ENCODE measurements at regions of chr5 and their contacts with region 1.

Region 1: DNA sequence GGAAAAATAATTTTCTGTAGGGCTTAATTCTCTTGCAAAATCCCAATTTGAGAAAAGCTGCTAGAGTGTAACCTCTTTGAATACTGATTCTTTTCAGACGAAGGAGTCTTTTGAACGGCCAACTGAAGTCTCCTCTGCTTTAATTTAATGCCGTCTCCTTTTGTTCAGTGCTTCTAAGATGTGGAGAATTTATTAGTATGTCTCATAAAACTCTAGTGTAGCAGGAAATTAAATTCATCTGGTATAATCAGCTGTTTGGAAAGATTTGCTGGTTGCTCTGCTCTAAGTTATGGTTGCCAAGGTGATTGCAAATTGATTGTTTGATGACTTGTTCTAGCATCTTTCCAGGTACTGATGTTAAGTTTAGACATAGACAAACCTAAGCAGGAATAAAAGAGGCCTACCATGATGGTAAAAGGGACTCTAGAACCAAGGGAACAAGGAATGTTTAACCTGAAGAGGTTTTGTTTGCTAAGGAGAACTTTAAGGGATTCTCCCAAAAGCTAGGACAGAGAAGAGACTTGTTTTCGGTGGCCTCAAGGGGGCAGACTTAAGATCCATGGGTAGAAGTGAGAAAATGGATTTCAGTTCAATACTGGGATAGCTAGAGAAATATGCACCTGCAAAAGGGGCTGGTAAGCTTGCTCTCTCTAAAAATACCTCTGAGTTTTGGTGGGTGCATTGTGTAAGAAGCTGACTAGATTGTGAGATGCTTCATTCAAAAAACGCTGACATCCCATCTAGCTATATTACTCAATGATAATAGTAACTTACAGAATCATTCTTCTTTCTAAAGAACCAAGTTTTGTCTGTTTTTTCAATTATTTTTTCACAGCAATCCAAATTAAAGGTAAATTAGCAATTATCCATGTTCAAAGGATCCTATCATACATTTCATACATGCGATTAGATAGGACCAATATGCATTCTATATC is 5.7 kb upstream of the ADRB2 start:
- DNase-seq: no peak
- H3K4me3 Mint-ChIP-seq: no peak overlapping the region
- H3K27ac Mint-ChIP-seq: no peak overlapping the region
- H3K4me1 Mint-ChIP-seq: peaks cover 9% of the 10 kb centered on the region
- H3K27me3 Mint-ChIP-seq: peaks cover 28% of the 10 kb centered on the region

Region 2: GRCh38 chr5:148849461-148849860 is 28.7 kb after region 1 on chr5:
- CTCF ChIA-PET with region 1: interaction called, 14 read pairs
- POLR2A ChIA-PET with region 1: interaction called, 58 read pairs
- DNase-seq: peak; percentile 73
- H3K4me3 Mint-ChIP-seq: peak overlapping the region; percentile 12
- H3K27ac Mint-ChIP-seq: peak overlapping the region; percentile 97
- H3K4me1 Mint-ChIP-seq: peaks cover 83% of the 10 kb centered on the region
- H3K27me3 Mint-ChIP-seq: peaks cover 2% of the 10 kb centered on the region